PC-3 (cell line): ENCODE measurements at regions of chr5 and their contacts with region 1.

Region 1: GRCh38 chr5:119470851-119471451 is 18.7 kb downstream of the HSD17B4 start:
- DNase-seq: peak; percentile 57
- ATAC-seq: peak; percentile 42; the same call in 1 of the 2 replicates
- H3K4me3 ChIP-seq: no peak overlapping the region
- H3K27ac ChIP-seq: no peak overlapping the region
- H3K4me1 ChIP-seq: no peaks in the 10 kb centered on the region
- H3K27me3 ChIP-seq: no peaks in the 10 kb centered on the region
- CTCF ChIP-seq: peak; percentile 86

Region 2: GRCh38 chr5:119355685-119356611 is 115.0 kb before region 1 on chr5 and contains the start of gene TNFAIP8:
- CTCF ChIA-PET with region 1: no interaction called
- POLR2A ChIA-PET with region 1: no interaction called
- intact Hi-C with region 1: no loop called
- DNase-seq: peak; percentile 69
- ATAC-seq: peak; percentile 79
- H3K4me3 ChIP-seq: peak within 1 kb of the TSS; percentile 94
- H3K27ac ChIP-seq: peak within 1 kb of the TSS; percentile 94
- H3K4me1 ChIP-seq: peaks cover 56% of the 10 kb centered on the region
- H3K27me3 ChIP-seq: no peaks in the 10 kb centered on the region
- CTCF ChIP-seq: no peak
- total RNA-seq, gene TNFAIP8: 11.8 and 20.0 TPM in 2 replicates

Region 3: DNA sequence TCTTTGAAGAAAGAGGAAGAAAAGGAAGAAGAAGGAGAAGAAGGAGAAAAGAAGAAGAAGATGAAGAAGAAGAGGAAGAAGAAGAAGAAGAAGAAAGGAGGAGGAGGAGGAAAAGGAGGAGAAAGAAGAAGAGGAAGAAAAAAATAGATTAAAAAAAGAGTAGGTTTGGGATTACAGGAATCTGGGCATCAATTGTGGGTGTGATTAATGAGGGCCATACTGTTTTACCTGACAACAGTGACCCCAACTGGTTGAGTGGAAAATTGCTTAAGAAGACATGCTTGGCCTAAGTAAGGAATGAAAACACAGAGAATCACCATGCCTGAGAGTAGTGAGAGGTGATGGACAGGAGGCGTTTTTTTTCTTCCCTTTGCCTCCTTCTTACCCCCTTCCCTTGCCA is 273.0 kb after region 1 on chr5:
- CTCF ChIA-PET with region 1: no interaction called
- POLR2A ChIA-PET with region 1: no interaction called
- intact Hi-C with region 1: loop called (anchors 1 kb)
- DNase-seq: peak; percentile 65
- ATAC-seq: peak; percentile 62
- H3K4me3 ChIP-seq: no peak overlapping the region
- H3K27ac ChIP-seq: no peak overlapping the region
- H3K4me1 ChIP-seq: peaks cover 3% of the 10 kb centered on the region; the same call in 1 of the 2 replicates
- H3K27me3 ChIP-seq: no peaks in the 10 kb centered on the region
- CTCF ChIP-seq: peak; percentile 70

Region 4: GRCh38 chr5:119828541-119828940 is 357.6 kb after region 1 on chr5:
- CTCF ChIA-PET with region 1: no interaction called
- POLR2A ChIA-PET with region 1: no interaction called
- intact Hi-C with region 1: no loop called
- DNase-seq: no peak
- ATAC-seq: no peak
- H3K4me3 ChIP-seq: no peak overlapping the region
- H3K27ac ChIP-seq: no peak overlapping the region
- H3K4me1 ChIP-seq: no peaks in the 10 kb centered on the region
- H3K27me3 ChIP-seq: no peaks in the 10 kb centered on the region
- CTCF ChIP-seq: no peak

Region 5: GRCh38 chr5:119943148-119943547 is 472.2 kb after region 1 on chr5:
- CTCF ChIA-PET with region 1: no interaction called
- POLR2A ChIA-PET with region 1: no interaction called
- intact Hi-C with region 1: loop called (anchors 1 kb)
- DNase-seq: peak; percentile 26
- ATAC-seq: peak; percentile 63
- H3K4me3 ChIP-seq: no peak overlapping the region
- H3K27ac ChIP-seq: no peak overlapping the region
- H3K4me1 ChIP-seq: no peaks in the 10 kb centered on the region
- H3K27me3 ChIP-seq: no peaks in the 10 kb centered on the region
- CTCF ChIP-seq: peak; percentile 51; the same call in 1 of the 2 replicates

Region 6: DNA sequence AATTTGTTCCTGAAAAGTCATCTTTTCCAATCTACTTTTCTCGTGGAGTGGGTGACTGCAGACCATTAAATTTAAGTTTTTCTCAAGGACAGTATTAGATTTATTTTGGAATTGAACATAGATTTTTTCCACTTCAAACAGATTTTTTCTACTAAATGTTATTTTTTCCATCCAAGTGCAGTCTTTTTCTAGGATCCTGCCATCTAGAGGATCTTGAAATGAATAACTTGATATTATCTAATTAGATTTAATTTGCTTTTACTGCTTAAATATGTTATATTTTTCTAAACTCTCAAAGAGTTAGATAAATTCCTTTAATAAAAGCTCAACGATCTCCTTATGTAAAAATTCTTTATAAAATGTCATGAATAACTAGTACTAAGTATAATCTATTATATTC is 856.2 kb after region 1 on chr5:
- CTCF ChIA-PET with region 1: no interaction called
- POLR2A ChIA-PET with region 1: no interaction called
- intact Hi-C with region 1: loop called (anchors 2 kb)
- DNase-seq: no peak
- ATAC-seq: no peak
- H3K4me3 ChIP-seq: no peak overlapping the region
- H3K27ac ChIP-seq: no peak overlapping the region
- H3K4me1 ChIP-seq: no peaks in the 10 kb centered on the region
- H3K27me3 ChIP-seq: no peaks in the 10 kb centered on the region
- CTCF ChIP-seq: peak; percentile 44

Region 7: DNA sequence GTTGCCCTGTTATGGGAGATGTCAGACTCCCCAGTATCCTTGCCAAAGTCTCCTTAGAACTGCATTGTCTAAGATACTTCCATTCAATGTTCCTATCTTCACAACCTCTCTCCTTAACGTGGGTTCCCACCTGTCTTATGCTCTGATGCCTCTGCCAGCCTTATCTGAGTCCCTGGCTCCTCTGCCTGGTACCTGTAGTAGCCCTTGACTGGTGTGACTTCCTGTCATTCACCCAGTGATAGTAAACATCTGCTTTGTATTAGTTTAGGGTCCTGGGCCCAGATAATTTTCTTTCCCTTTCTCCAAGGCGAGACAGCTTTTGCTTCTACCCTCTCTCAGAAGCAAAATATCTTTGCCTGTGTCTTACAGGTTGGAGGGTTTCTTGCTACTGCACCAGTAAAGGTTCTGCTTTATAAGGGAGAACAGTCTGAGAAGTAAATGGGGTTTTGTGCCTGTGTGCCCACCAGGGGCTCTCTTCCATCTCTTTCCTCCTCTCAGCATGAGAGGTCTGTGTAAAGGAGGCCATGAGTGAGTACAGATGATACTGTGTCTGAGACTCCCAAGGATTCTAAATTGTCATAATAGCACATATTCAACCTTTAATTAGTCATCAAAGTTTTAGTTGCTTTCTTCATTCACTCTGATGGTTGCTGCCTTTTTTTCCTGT is 1213.9 kb after region 1 on chr5:
- CTCF ChIA-PET with region 1: no interaction called
- POLR2A ChIA-PET with region 1: no interaction called
- intact Hi-C with region 1: loop called (anchors 5 kb)
- DNase-seq: no peak
- ATAC-seq: no peak
- H3K4me3 ChIP-seq: no peak overlapping the region
- H3K27ac ChIP-seq: no peak overlapping the region
- H3K4me1 ChIP-seq: peaks cover 33% of the 10 kb centered on the region
- H3K27me3 ChIP-seq: no peaks in the 10 kb centered on the region
- CTCF ChIP-seq: peak; percentile 25; the same call in 1 of the 2 replicates